ENCODE measurements at regions of chr9 and their contacts with region 1.

Region 1: GRCh38 chr9:35814841-35815543 is at the start of gene HINT2:
- DNase-seq: peak; percentile 97
- H3K4me3 Mint-ChIP-seq: peak within 1 kb of the TSS; percentile 89
- H3K27ac Mint-ChIP-seq: peak within 1 kb of the TSS; percentile 96
- H3K4me1 Mint-ChIP-seq: peaks cover 33% of the 10 kb centered on the region
- H3K27me3 Mint-ChIP-seq: no peaks in the 10 kb centered on the region
- total RNA-seq, gene HINT2: 49.4 and 49.7 TPM in 2 replicates

Region 2: GRCh38 chr9:34376596-34377403 is 1438.2 kb before region 1 on chr9 and contains the start of gene MYORG:
- intact Hi-C with region 1: loop called (anchors 5 kb)
- DNase-seq: peak; percentile 97
- H3K4me3 Mint-ChIP-seq: peak within 1 kb of the TSS; percentile 86
- H3K27ac Mint-ChIP-seq: no peak within 1 kb of the TSS
- H3K4me1 Mint-ChIP-seq: peaks cover 21% of the 10 kb centered on the region
- H3K27me3 Mint-ChIP-seq: no peaks in the 10 kb centered on the region
- total RNA-seq, gene MYORG: 1.6 TPM in 2 replicates

Region 3: DNA sequence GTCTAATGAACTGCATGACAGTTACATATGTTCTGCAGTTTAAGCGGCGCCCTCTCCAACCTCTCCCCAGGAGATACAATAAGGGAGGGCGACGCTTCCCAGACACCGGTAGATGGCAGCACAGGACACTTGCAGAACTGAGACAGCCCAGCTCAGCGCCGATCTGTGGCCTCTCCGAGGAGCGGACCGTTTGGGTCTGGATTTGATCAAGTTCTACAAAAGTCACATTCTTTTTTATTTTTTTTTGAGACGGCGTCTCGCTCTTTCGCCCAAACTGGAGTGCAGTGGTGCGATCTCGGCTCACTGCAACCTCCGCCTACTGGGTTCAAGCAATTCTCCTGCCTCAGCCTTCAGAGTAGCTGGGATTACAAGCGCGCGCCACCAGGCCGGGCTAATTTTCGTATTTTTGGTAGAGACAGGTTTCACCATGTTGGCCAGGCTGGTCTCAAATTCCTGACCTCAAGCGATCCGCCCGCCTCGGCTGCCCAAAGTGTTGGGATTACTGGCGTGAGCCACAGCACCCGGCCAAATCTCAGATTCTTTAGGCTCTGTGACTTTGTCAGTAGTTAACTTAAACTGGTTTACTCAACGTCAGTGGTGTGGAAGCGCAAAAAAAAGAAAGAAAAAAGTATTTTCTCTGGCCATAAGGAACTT is 698.0 kb before region 1 on chr9:
- intact Hi-C with region 1: loop called (anchors 10 kb)
- DNase-seq: peak; percentile 81
- H3K4me3 Mint-ChIP-seq: peak overlapping the region; percentile 91
- H3K27ac Mint-ChIP-seq: peak overlapping the region; percentile 89
- H3K4me1 Mint-ChIP-seq: peaks cover 36% of the 10 kb centered on the region
- H3K27me3 Mint-ChIP-seq: peaks cover 8% of the 10 kb centered on the region

Region 4: DNA sequence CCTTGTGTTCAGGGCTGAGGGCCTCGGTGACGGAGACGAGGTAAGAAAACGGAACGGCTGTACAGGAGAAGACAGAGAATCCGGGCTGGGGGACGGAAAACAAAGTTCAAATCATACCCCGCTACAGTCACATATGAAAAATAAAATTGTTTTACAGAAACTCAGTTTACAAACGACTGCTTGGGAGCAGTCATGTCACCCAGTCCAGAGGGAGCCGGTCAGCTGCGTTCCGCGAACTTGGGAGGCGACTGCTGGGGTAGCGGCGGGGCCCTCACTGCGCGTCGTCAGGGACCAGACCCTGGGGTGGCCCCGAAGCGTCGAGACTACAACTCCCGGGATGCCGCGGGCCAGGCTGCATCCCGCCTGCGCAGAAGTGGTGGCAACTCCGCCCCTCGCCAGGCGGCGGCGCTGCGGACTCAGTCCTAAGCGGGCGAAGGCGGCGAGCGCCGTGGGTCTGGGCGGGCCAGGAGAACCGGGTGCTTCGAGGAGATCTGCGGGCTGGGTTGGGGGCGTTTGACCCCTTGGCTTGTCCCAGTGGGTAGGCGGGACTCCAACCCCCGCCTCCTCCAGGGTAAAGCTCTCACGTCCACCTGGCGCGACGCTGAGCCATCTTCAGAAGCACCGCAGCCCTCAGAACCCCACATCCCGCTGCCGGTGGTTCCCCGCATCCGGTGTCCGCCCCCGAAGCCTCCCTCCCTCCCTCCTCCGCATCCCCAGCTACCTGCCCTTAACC is 168.3 kb before region 1 on chr9:
- intact Hi-C with region 1: loop called (anchors 2 kb)
- DNase-seq: peak; percentile 91
- H3K4me3 Mint-ChIP-seq: peak overlapping the region; percentile 96
- H3K27ac Mint-ChIP-seq: peak overlapping the region; percentile 96
- H3K4me1 Mint-ChIP-seq: peaks cover 45% of the 10 kb centered on the region
- H3K27me3 Mint-ChIP-seq: no peaks in the 10 kb centered on the region

Region 5: GRCh38 chr9:35748858-35749514 is 66.0 kb before region 1 on chr9 and contains the starts of genes GBA2 and RGP1:
- intact Hi-C with region 1: loop called (anchors 2 kb)
- DNase-seq: peak; percentile 70
- H3K4me3 Mint-ChIP-seq: peak within 1 kb of the TSS; percentile 92
- H3K27ac Mint-ChIP-seq: peak within 1 kb of the TSS; percentile 82
- H3K4me1 Mint-ChIP-seq: peaks cover 35% of the 10 kb centered on the region
- H3K27me3 Mint-ChIP-seq: no peaks in the 10 kb centered on the region
- total RNA-seq, gene GBA2: 54.0 and 57.0 TPM in 2 replicates
- total RNA-seq, gene RGP1: 17.0 and 17.1 TPM in 2 replicates

Region 6: DNA sequence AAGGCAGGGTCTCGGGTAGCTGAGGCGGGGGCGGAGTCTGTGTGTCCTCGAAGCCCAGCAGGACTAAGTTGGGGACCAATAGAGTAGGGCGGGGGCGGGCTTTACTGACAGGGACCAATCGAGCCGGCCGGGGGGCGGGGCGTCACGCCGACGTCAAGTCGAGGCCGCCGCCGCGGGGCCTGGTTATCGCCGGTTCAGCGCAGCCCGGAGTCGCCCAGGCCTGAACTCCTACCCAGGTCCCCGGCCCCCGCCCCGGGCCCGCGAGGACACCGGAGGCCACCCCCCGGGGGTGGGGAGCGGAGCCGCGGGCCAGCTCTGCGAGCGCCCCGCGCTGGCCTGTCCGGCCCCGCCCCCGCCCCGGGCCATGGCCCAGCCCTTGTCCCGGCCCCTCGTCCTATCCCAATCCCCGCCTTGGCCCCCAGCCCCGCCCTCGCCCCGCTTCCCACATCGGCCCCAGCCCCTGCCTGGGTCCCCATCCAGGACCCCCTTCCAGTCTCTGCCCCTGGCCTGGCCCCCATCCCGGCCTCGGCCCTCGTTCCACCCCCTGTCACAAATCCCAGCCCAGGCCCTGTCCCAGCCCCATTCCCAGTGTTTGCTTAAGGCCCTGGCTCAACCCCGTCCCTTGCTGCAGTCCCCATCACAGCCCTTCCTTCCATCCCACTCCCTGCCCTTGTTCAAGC is 14.2 kb after region 1 on chr9 and contains the start of gene TMEM8B:
- intact Hi-C with region 1: loop called (anchors 1 kb)
- DNase-seq: peak; percentile 86
- H3K4me3 Mint-ChIP-seq: peak within 1 kb of the TSS; percentile 87
- H3K27ac Mint-ChIP-seq: peak within 1 kb of the TSS; percentile 79
- H3K4me1 Mint-ChIP-seq: peaks cover 18% of the 10 kb centered on the region
- H3K27me3 Mint-ChIP-seq: no peaks in the 10 kb centered on the region
- total RNA-seq, gene TMEM8B: 3.0 and 3.4 TPM in 2 replicates